ENCODE measurements at regions of chr3 and their contacts with region 1.

Region 1: DNA sequence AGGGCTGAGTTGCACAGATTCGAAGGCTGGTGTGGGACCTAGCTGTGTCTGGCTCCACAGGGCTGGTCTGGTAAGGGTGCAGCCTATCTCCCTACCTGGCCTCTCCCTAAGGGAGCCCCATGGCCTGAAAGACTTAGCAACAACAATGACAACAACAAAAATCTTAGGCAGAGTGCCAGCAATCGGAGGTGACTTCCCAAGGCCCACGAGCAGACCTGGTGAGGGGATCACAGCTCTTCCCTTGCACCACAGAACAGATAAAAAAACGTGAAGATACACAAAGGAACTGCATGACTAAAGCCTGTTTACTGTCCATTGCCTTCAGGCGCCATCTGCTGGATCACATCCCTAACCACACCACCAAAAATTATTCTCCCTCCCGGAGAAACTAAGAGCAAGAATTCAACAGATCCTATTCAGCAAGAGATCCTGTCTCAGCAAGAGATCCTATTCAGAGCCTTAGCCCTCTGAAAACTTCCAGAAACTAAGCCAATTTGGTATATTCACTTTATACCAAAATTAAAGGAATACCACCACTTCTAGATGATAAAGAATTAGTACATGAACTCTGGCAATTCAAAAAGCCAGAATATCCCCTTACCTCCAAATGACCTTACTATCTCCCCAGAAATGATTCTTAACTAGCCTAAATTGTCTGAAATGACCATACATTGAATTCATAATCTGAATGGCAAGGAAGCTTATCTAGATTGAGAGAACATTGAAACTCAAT is 24.1 kb upstream of the OR5K4 start:
- DNase-seq: peak in 8 of 10 donors; percentile 3 to 68 (median 55)
- H3K4me3 ChIP-seq: peak overlapping the region in 1 of 59 donors; percentile 19
- H3K27ac ChIP-seq: no peak overlapping the region
- H3K27me3 ChIP-seq: peaks cover 0 to 13% (median 0%) of the 10 kb centered on the region in 45 donors
- CTCF ChIP-seq: peak; percentile 53 to 92 (median 75)

Region 2: GRCh38 chr3:98188545-98188944 is 141.0 kb before region 1 on chr3:
- intact Hi-C with region 1: loop called in 1 of 2 experiments (anchors 2 kb)
- DNase-seq: no peak
- H3K4me3 ChIP-seq: no peak overlapping the region
- H3K27ac ChIP-seq: no peak overlapping the region
- H3K27me3 ChIP-seq: no peaks in the 10 kb centered on the region
- CTCF ChIP-seq: peak in 27 of 56 donors; percentile 10 to 48 (median 25)

Region 3: DNA sequence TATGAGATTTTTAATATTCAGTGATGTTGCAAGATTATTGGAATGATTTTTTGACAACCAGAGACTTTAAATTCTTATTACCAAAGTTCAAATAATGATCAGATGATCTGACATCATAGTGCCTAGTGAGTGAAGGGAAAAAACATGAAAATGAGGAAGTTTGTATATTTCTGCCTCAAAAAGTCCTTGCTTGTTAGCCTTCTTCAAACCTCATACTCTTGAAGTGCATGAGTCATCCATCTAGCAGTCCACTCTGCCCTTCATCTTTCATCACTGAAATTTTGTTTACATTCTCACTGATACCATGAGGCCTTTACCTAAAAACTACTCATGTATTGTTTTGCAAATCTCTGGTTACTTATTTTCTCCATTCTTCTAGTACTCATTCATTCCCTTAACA is 89.4 kb before region 1 on chr3:
- intact Hi-C with region 1: no loop called
- DNase-seq: no peak
- H3K4me3 ChIP-seq: no peak overlapping the region
- H3K27ac ChIP-seq: no peak overlapping the region
- H3K27me3 ChIP-seq: no peaks in the 10 kb centered on the region
- CTCF ChIP-seq: no peak

Region 4: GRCh38 chr3:98573181-98573728 is 243.7 kb after region 1 on chr3:
- intact Hi-C with region 1: loop called in 1 of 2 experiments (anchors 10 kb)
- DNase-seq: no peak
- H3K4me3 ChIP-seq: no peak overlapping the region
- H3K27ac ChIP-seq: peak overlapping the region in 52 of 59 donors; percentile 4 to 90 (median 60)
- H3K27me3 ChIP-seq: no peaks in the 10 kb centered on the region
- CTCF ChIP-seq: peak; percentile 24 to 72 (median 56)

Region 5: DNA sequence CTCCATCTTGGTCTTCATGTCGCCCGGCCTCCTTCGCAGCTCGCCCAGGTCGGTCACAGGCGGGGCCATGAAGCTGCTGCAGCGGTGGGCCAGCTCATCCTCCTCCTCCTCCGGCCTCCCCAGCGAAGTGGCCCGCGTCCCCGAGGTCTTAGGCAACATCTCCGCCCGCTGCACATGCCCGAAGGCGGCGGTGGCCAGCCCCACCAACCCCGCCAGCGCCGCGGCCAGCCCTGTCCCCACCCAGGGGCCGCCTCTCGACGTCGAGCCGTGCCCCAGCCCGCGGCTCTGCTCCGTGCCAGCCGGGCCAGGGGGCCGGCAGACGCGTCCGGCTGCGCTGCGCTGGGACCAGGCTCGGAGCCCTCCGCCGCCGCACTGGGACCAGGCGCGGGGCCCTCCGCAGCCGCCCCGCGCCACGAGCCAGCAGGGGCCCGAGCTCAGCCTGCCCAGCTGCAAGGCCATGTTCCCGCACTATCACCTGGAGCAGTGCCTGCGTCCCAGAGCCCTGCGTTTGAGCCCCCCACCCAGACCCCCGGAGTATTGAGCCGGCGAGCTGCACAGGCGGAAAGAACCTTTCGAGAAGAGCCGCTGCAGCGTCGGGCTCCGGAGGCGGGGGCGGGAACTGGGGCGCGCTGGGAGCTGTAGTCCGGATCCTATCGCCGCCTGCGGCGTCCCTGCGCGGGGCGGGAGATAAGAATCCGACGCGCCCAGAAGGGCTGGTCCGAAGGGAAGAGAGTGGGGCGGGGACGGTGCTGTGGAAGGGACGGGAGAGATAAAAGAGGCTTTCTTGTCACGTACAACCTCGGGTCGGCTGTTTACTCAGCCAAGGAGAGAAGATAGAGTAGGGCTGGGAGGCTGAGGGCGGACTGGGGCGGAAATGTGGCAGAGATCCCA is 263.7 kb after region 1 on chr3 and contains the start of gene CPOX:
- intact Hi-C with region 1: loop called (anchors 5 to 10 kb)
- DNase-seq: peak; percentile 80 to 95 (median 90)
- H3K4me3 ChIP-seq: peak within 1 kb of the TSS; percentile 58 to 96 (median 85)
- H3K27ac ChIP-seq: peak within 1 kb of the TSS; percentile 49 to 98 (median 94)
- H3K27me3 ChIP-seq: no peaks in the 10 kb centered on the region
- CTCF ChIP-seq: peak in 31 of 56 donors; percentile 5 to 53 (median 31)
- total RNA-seq, gene CPOX: 23.2 to 140 (median 47.8) TPM

Measured in dorsolateral prefrontal cortex (tissue), 120 donors.